CD8-positive, alpha-beta T cell (primary cell): ENCODE measurements at regions of chr18 and their contacts with region 1.

Region 1: GRCh38 chr18:75844146-75844545 is 416.6 kb upstream of the SMIM21 start:
- DNase-seq: no peak
- ATAC-seq: no peak
- H3K4me3 ChIP-seq: no peak overlapping the region
- H3K4me3 Mint-ChIP-seq: no peak overlapping the region
- H3K27ac ChIP-seq: no peak overlapping the region
- H3K27ac Mint-ChIP-seq: no peak overlapping the region
- H3K4me1 ChIP-seq: no peaks in the 10 kb centered on the region
- H3K4me1 Mint-ChIP-seq: no peaks in the 10 kb centered on the region
- H3K27me3 ChIP-seq: no peaks in the 10 kb centered on the region
- H3K27me3 Mint-ChIP-seq: no peaks in the 10 kb centered on the region
- CTCF ChIP-seq: no peak

Region 2: GRCh38 chr18:75784398-75784789 is 59.8 kb before region 1 on chr18:
- CTCF ChIA-PET with region 1: no interaction called
- POLR2A ChIA-PET with region 1: no interaction called
- intact Hi-C with region 1: loop called in 1 of 2 experiments (anchors 10 kb)
- DNase-seq: no peak
- ATAC-seq: no peak
- H3K4me3 ChIP-seq: no peak overlapping the region
- H3K4me3 Mint-ChIP-seq: no peak overlapping the region
- H3K27ac ChIP-seq: no peak overlapping the region
- H3K27ac Mint-ChIP-seq: no peak overlapping the region
- H3K4me1 ChIP-seq: no peaks in the 10 kb centered on the region
- H3K4me1 Mint-ChIP-seq: no peaks in the 10 kb centered on the region
- H3K27me3 ChIP-seq: no peaks in the 10 kb centered on the region
- H3K27me3 Mint-ChIP-seq: peaks cover 18% of the 10 kb centered on the region
- CTCF ChIP-seq: no peak

Region 3: DNA sequence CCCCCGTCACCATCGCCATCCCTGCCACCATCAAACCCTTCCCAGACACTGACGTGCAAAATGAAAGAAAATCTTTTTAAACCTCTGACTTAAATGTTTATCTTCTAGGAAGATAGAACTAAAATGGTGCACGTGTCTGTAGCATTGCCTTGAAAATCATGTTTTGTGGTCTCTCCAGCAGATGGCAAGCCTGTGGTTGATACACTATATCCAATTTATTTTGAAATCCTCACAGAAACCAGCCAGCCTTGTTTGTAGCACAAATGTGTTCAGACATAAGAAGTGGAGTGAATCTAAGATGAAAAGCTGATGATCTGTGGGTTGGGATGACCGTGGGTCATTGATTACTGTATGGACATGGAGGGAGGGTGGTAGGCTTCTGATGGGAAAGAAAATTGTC is 19.6 kb after region 1 on chr18:
- CTCF ChIA-PET with region 1: no interaction called
- POLR2A ChIA-PET with region 1: no interaction called
- intact Hi-C with region 1: no loop called
- DNase-seq: no peak
- ATAC-seq: no peak
- H3K4me3 ChIP-seq: no peak overlapping the region
- H3K4me3 Mint-ChIP-seq: no peak overlapping the region
- H3K27ac ChIP-seq: no peak overlapping the region
- H3K27ac Mint-ChIP-seq: no peak overlapping the region
- H3K4me1 ChIP-seq: no peaks in the 10 kb centered on the region
- H3K4me1 Mint-ChIP-seq: no peaks in the 10 kb centered on the region
- H3K27me3 ChIP-seq: peaks cover 0 to 2% of the 10 kb centered on the region in 2 experiments
- H3K27me3 Mint-ChIP-seq: peaks cover 25% of the 10 kb centered on the region
- CTCF ChIP-seq: no peak

Region 4: DNA sequence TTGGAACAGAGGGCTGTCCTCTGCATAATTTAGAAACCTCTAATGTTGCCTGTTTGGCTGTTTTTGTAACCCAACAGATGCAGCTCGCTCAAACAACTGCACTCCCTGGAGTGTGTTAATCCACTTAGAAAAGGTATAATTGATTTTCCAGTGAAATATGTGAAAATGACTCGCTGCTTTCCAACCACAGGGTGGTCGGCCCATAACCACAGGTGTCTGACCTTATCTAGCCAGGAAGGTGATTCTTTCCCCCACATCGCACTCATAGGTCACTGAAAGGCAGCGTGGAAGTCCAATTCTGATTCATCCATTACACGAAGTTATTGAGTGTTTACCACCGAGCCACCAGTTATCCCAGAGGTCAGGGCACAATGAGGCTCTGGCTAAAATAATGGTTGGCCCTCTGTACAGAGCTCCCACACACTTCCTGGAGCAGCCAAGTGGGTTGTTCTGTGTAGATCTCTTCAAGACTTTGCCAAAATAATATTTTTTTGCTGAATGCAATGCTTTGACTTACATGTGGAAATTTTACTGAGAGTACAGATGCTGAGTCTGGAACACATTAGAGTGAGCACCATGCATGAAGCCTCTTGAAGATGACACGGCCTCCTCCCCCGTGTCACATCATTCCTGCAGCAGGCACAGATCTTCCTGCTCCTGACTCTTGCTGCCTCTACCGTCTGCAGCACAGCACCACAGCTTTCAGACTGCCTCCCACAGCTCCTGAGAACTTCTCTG is 254.7 kb after region 1 on chr18:
- CTCF ChIA-PET with region 1: no interaction called
- POLR2A ChIA-PET with region 1: no interaction called
- intact Hi-C with region 1: no loop called
- DNase-seq: no peak
- ATAC-seq: no peak
- H3K4me3 ChIP-seq: no peak overlapping the region
- H3K4me3 Mint-ChIP-seq: no peak overlapping the region
- H3K27ac ChIP-seq: no peak overlapping the region
- H3K27ac Mint-ChIP-seq: no peak overlapping the region
- H3K4me1 ChIP-seq: no peaks in the 10 kb centered on the region
- H3K4me1 Mint-ChIP-seq: no peaks in the 10 kb centered on the region
- H3K27me3 ChIP-seq: no peaks in the 10 kb centered on the region
- H3K27me3 Mint-ChIP-seq: no peaks in the 10 kb centered on the region
- CTCF ChIP-seq: no peak